ENCODE measurements at regions of chr3 and their contacts with region 1.

Region 1: GRCh38 chr3:88058591-88059368 is at the starts of genes CGGBP1 and ZNF654:
- DNase-seq: peak; percentile 98 to 99
- ATAC-seq: peak; percentile 94 to 96
- H3K4me3 ChIP-seq: peak within 1 kb of the TSS; percentile 81 to 99 (median 96)
- H3K27ac ChIP-seq: peak within 1 kb of the TSS; percentile 94 to 99 (median 98)
- H3K4me1 ChIP-seq: peaks cover 45 to 47% of the 10 kb centered on the region in 2 donors
- H3K27me3 ChIP-seq: no peaks in the 10 kb centered on the region
- CTCF ChIP-seq: peak in 1 of 5 experiments; percentile 29
- POLR2A ChIP-seq: peak; percentile 90 to 94
- total RNA-seq, gene CGGBP1: 25.9 to 47.3 (median 41.7) TPM
- total RNA-seq, gene ZNF654: 7.8 to 12.5 (median 9.8) TPM

Region 2: DNA sequence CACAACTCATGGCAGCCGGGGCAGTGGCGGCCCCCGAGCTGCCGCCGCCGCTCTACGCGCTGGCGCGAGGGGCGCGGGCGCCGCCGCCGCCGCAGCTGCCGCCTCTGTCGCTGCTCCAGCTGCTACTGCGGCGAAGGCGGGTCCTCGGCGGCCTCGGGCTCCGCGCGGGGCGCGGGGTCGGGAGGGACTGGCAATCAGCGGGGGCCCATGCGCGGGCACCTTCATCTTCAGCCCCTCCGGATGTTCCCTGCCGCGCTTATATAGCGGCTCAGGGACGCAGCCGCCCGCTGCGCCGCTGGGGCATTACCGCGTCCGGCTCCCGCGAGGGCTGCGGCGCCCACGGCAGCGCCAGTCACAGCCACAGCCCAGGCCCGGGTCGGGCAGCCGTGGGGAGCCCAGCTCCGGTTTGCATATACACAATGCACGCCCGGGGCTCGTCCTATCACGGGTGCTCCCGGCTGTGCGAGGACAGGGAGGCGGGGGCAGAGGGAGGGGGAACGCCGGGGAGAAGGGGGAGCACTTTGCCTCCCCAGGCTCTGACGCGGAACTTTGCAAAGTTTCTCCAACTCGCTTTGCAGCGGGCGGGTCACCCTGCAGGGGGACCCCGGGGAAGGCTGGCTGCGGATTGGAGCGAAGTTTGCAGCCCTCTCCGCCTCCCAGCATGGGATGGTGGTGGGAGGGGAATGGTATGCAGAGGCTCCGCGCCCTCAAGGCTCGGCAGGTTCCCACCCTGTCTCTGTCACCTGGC is 1067.9 kb before region 1 on chr3 and contains the start of gene VGLL3:
- in situ Hi-C with region 1: loop called in 1 of 4 experiments (anchors 25 kb)
- intact Hi-C with region 1: no loop called
- DNase-seq: peak; percentile 41 to 52
- ATAC-seq: peak; percentile 55 to 63
- H3K4me3 ChIP-seq: peak within 1 kb of the TSS; percentile 49 to 69 (median 64)
- H3K27ac ChIP-seq: peak within 1 kb of the TSS; percentile 59 to 81 (median 70)
- H3K4me1 ChIP-seq: peaks cover 0 to 4% of the 10 kb centered on the region in 2 donors
- H3K27me3 ChIP-seq: peaks cover 16 to 30% (median 28%) of the 10 kb centered on the region in 3 donors
- CTCF ChIP-seq: no peak
- POLR2A ChIP-seq: peak; percentile 29 to 62
- total RNA-seq, gene VGLL3: 3.5 to 9.5 (median 5.6) TPM

Region 3: GRCh38 chr3:87227104-87227834 is 831.5 kb before region 1 on chr3 and contains the start of gene CHMP2B:
- in situ Hi-C with region 1: no loop called
- intact Hi-C with region 1: loop called (anchors 5 kb)
- DNase-seq: peak; percentile 87 to 94
- ATAC-seq: peak; percentile 94 to 97
- H3K4me3 ChIP-seq: peak within 1 kb of the TSS; percentile 79 to 100 (median 90)
- H3K27ac ChIP-seq: peak within 1 kb of the TSS; percentile 94 to 100 (median 98)
- H3K4me1 ChIP-seq: peaks cover 30 to 32% of the 10 kb centered on the region in 2 donors
- H3K27me3 ChIP-seq: no peaks in the 10 kb centered on the region
- CTCF ChIP-seq: no peak
- POLR2A ChIP-seq: peak; percentile 91 to 92
- total RNA-seq, gene CHMP2B: 30.7 to 46.9 (median 33.6) TPM

Region 4: GRCh38 chr3:87973906-87974305 is 84.9 kb before region 1 on chr3:
- in situ Hi-C with region 1: no loop called
- intact Hi-C with region 1: no loop called
- DNase-seq: no peak
- ATAC-seq: no peak
- H3K4me3 ChIP-seq: no peak overlapping the region
- H3K27ac ChIP-seq: no peak overlapping the region
- H3K4me1 ChIP-seq: no peaks in the 10 kb centered on the region
- H3K27me3 ChIP-seq: no peaks in the 10 kb centered on the region
- CTCF ChIP-seq: no peak
- POLR2A ChIP-seq: no peak

Region 5: DNA sequence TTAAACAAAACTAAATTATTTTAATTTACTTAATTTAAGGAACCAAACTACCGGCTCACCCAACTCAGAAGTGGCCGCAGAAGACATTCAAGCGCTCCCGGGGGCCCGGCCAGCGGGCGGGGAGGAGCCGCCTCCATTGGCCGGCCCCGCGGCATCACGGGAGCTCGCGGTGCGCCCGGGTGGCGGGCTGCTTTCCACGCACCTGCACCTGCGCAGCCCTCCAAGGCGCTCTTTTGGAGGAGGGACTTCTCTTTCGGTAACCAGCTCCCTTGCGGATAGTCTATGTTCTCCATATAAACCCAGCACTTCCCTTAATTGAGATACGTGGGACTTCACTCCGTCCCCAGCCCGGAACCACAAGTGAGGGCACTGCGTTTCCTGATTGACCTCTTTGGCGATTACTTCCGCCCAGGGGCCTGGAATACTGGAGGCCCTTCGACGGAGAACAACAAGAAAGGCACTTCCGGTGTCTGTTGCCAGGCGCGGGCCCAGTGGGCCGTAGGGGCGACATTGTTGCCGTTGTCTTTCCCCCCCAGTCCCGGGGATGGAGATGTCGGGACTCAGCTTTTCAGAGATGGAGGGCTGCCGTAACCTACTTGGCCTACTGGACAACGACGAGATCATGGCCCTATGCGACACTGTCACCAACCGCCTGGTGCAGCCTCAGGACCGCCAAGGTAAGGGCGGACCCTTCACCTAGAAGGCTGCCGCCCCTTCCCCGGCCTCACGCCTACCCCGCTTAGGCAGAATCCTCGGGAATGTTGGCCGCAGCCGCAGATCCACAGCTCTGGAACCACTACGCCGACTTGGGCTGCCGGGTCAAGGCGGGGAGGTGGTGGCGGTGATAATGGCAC is 91.0 kb after region 1 on chr3 and contains the start of gene C3orf38:
- in situ Hi-C with region 1: loop called in 1 of 4 experiments (anchors 10 kb)
- intact Hi-C with region 1: loop called (anchors 1 kb)
- DNase-seq: peak; percentile 81 to 85
- ATAC-seq: peak; percentile 99
- H3K4me3 ChIP-seq: peak within 1 kb of the TSS; percentile 75 to 96 (median 90)
- H3K27ac ChIP-seq: peak within 1 kb of the TSS; percentile 89 to 94 (median 90)
- H3K4me1 ChIP-seq: peaks cover 15 to 18% of the 10 kb centered on the region in 2 donors
- H3K27me3 ChIP-seq: no peaks in the 10 kb centered on the region
- CTCF ChIP-seq: no peak
- POLR2A ChIP-seq: peak; percentile 43 to 56
- total RNA-seq, gene C3orf38: 6.0 to 14.5 (median 8.5) TPM

Measured in gastrocnemius medialis (tissue), 4 donors.